ENCODE measurements at regions of chr2 and their contacts with region 1.

Region 1: GRCh38 chr2:28392297-28393113 is at the start of gene FOSL2:
- DNase-seq: peak; percentile 99
- H3K4me3 Mint-ChIP-seq: no peak within 1 kb of the TSS
- H3K27ac Mint-ChIP-seq: no peak within 1 kb of the TSS
- H3K4me1 Mint-ChIP-seq: peaks cover 18% of the 10 kb centered on the region
- H3K27me3 Mint-ChIP-seq: no peaks in the 10 kb centered on the region
- CTCF ChIP-seq: no peak
- total RNA-seq, gene FOSL2: 122 and 141 TPM in 2 replicates

Region 2: DNA sequence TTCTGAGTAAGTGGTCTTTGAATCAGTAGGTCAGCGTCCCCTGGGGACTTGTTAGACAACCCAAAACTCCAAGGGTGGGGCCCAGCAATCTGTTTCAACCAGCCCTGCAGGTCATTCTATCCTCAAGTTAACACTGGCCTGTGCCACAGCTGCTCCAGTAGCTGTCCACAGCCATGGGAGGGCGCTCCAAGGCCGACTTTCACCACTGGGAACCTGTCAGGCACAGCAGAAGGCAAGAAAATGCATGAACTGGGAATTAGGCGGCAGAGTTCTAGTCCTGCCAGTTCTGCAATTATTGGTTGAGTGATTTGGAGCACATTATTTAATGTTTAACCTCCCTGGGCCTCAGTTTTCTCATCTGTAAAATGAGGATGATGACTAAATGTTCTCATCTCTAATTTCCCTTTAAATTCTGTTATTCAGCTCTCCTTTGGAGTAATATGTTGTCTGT is 638.3 kb before region 1 on chr2:
- CTCF ChIA-PET with region 1: interaction called, 3 read pairs
- POLR2A ChIA-PET with region 1: interaction called, 7 read pairs
- intact Hi-C with region 1: loop called (anchors 1 kb)
- DNase-seq: peak; percentile 82
- H3K4me3 Mint-ChIP-seq: peak overlapping the region; percentile 31
- H3K27ac Mint-ChIP-seq: no peak overlapping the region
- H3K4me1 Mint-ChIP-seq: peaks cover 42% of the 10 kb centered on the region
- H3K27me3 Mint-ChIP-seq: no peaks in the 10 kb centered on the region
- CTCF ChIP-seq: peak; percentile 95

Region 3: GRCh38 chr2:27954771-27955383 is 437.6 kb before region 1 on chr2:
- CTCF ChIA-PET with region 1: no interaction called
- POLR2A ChIA-PET with region 1: interaction called, 57 read pairs
- intact Hi-C with region 1: loop called (anchors 1 kb)
- DNase-seq: peak; percentile 98
- H3K4me3 Mint-ChIP-seq: peak overlapping the region; percentile 2
- H3K27ac Mint-ChIP-seq: peak overlapping the region; percentile 93
- H3K4me1 Mint-ChIP-seq: peaks cover 58% of the 10 kb centered on the region
- H3K27me3 Mint-ChIP-seq: no peaks in the 10 kb centered on the region
- CTCF ChIP-seq: peak; percentile 29

Region 4: DNA sequence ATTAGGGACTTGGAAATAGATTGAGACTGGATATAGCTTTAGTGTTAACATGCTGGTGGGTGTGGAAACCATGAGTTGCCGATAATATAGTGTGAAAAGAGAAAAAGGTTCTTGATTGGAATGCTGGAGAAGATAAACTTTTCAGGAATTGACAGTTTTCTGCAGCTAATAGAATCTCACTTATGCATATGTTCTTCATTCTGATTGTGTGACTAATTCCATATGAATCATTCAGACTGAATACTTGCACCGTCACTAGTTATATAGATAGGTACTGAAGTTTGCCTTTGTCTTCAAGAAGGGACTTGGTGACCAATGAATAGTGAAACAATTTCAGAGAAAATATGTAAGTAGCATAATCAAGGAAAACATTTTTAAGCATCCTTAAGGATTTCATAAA is 225.5 kb before region 1 on chr2:
- CTCF ChIA-PET with region 1: interaction called, 3 read pairs
- POLR2A ChIA-PET with region 1: interaction called, 13 read pairs
- intact Hi-C with region 1: no loop called
- DNase-seq: peak; percentile 27
- H3K4me3 Mint-ChIP-seq: no peak overlapping the region
- H3K27ac Mint-ChIP-seq: no peak overlapping the region
- H3K4me1 Mint-ChIP-seq: peaks cover 49% of the 10 kb centered on the region
- H3K27me3 Mint-ChIP-seq: no peaks in the 10 kb centered on the region
- CTCF ChIP-seq: no peak

Region 5: GRCh38 chr2:28252311-28252710 is 140.2 kb before region 1 on chr2:
- CTCF ChIA-PET with region 1: no interaction called
- POLR2A ChIA-PET with region 1: interaction called, 19 read pairs
- intact Hi-C with region 1: no loop called
- DNase-seq: no peak
- H3K4me3 Mint-ChIP-seq: no peak overlapping the region
- H3K27ac Mint-ChIP-seq: peak overlapping the region; percentile 39
- H3K4me1 Mint-ChIP-seq: peaks cover 7% of the 10 kb centered on the region
- H3K27me3 Mint-ChIP-seq: no peaks in the 10 kb centered on the region
- CTCF ChIP-seq: no peak

Region 6: DNA sequence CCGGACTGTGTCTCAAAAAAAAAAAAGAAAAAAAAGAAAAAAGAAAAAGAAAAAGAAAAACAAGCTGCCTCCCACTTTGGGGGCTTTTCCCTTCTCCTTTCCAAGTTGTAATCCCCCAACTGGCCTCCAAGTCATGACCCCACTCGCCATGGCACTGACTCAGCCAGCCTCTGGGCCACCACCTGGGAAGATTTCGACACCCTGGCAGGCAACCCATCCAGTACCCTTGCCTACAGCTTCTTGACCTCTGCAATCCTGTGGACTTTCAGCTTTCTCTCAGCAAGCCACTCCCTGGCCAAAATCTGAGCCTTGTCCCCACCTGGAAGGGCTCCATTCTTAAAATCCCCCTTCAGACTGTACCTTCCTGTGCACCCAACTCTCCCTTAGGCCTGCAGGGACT is 22.1 kb before region 1 on chr2:
- CTCF ChIA-PET with region 1: no interaction called
- POLR2A ChIA-PET with region 1: interaction called, 295 read pairs
- intact Hi-C with region 1: no loop called
- DNase-seq: peak; percentile 80
- H3K4me3 Mint-ChIP-seq: peak overlapping the region; percentile 29
- H3K27ac Mint-ChIP-seq: peak overlapping the region; percentile 75
- H3K4me1 Mint-ChIP-seq: peaks cover 11% of the 10 kb centered on the region
- H3K27me3 Mint-ChIP-seq: no peaks in the 10 kb centered on the region
- CTCF ChIP-seq: no peak

Region 7: GRCh38 chr2:28445448-28446258 is 53.1 kb after region 1 on chr2:
- CTCF ChIA-PET with region 1: no interaction called
- POLR2A ChIA-PET with region 1: interaction called, 26 read pairs
- intact Hi-C with region 1: no loop called
- DNase-seq: peak; percentile 99
- H3K4me3 Mint-ChIP-seq: peak overlapping the region; percentile 20
- H3K27ac Mint-ChIP-seq: peak overlapping the region; percentile 11
- H3K4me1 Mint-ChIP-seq: peaks cover 54% of the 10 kb centered on the region
- H3K27me3 Mint-ChIP-seq: no peaks in the 10 kb centered on the region
- CTCF ChIP-seq: no peak

Region 8: GRCh38 chr2:28544919-28545589 is 152.5 kb after region 1 on chr2:
- CTCF ChIA-PET with region 1: no interaction called
- POLR2A ChIA-PET with region 1: no interaction called
- intact Hi-C with region 1: no loop called
- DNase-seq: no peak
- H3K4me3 Mint-ChIP-seq: no peak overlapping the region
- H3K27ac Mint-ChIP-seq: no peak overlapping the region
- H3K4me1 Mint-ChIP-seq: no peaks in the 10 kb centered on the region
- H3K27me3 Mint-ChIP-seq: no peaks in the 10 kb centered on the region
- CTCF ChIP-seq: no peak

Measured in MCF 10A (cell line).